Activated CD4-positive, alpha-beta memory T cell treated with anti-CD3 and anti-CD28 coated beads for 36 hours (primary cell): ENCODE measurements at regions of chrX and their contacts with region 1.

Region 1: GRCh38 chrX:100768679-100769338 is 36.9 kb upstream of the SYTL4 start:
- DNase-seq: peak; percentile 86
- H3K4me3 Mint-ChIP-seq: no peak overlapping the region
- H3K27ac Mint-ChIP-seq: no peak overlapping the region
- H3K4me1 Mint-ChIP-seq: no peaks in the 10 kb centered on the region
- H3K27me3 Mint-ChIP-seq: no peaks in the 10 kb centered on the region

Region 2: GRCh38 chrX:100674705-100675104 is 94.1 kb before region 1 on chrX:
- CTCF ChIA-PET with region 1: interaction called, 29 read pairs
- POLR2A ChIA-PET with region 1: no interaction called
- intact Hi-C with region 1: loop called (anchors 1 kb)
- DNase-seq: no peak
- H3K4me3 Mint-ChIP-seq: no peak overlapping the region
- H3K27ac Mint-ChIP-seq: no peak overlapping the region
- H3K4me1 Mint-ChIP-seq: peaks cover 20% of the 10 kb centered on the region
- H3K27me3 Mint-ChIP-seq: no peaks in the 10 kb centered on the region

Region 3: GRCh38 chrX:100685284-100685996 is 83.4 kb before region 1 on chrX:
- CTCF ChIA-PET with region 1: interaction called, 91 read pairs
- POLR2A ChIA-PET with region 1: no interaction called
- intact Hi-C with region 1: loop called (anchors 1 kb)
- DNase-seq: peak; percentile 71
- H3K4me3 Mint-ChIP-seq: no peak overlapping the region
- H3K27ac Mint-ChIP-seq: no peak overlapping the region
- H3K4me1 Mint-ChIP-seq: peaks cover 12% of the 10 kb centered on the region
- H3K27me3 Mint-ChIP-seq: peaks cover 1% of the 10 kb centered on the region

Region 4: DNA sequence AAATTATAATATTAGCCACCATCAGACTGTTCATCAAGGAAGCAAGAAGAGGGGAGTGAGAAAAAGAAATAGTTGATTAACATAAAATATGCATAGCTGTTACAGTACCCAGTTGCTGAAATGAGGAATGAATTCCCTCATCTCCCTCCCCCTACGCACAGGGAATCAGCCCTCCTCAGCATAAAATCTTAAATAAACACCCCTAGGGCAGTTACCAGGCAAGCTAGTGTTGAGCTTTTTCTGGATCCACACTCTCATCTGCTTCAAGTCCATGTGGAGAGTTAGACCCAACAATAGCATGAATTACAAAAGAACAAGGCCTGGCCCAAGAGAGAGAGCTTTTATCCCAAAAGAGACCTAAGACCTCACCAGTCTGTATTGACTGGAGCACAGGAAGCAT is 17.9 kb before region 1 on chrX:
- CTCF ChIA-PET with region 1: interaction called, 11 read pairs
- POLR2A ChIA-PET with region 1: no interaction called
- intact Hi-C with region 1: no loop called
- DNase-seq: no peak
- H3K4me3 Mint-ChIP-seq: no peak overlapping the region
- H3K27ac Mint-ChIP-seq: no peak overlapping the region
- H3K4me1 Mint-ChIP-seq: no peaks in the 10 kb centered on the region
- H3K27me3 Mint-ChIP-seq: no peaks in the 10 kb centered on the region

Region 5: GRCh38 chrX:100852810-100853209 is 84.0 kb after region 1 on chrX:
- CTCF ChIA-PET with region 1: no interaction called
- POLR2A ChIA-PET with region 1: no interaction called
- intact Hi-C with region 1: no loop called
- DNase-seq: no peak
- H3K4me3 Mint-ChIP-seq: no peak overlapping the region
- H3K27ac Mint-ChIP-seq: no peak overlapping the region
- H3K4me1 Mint-ChIP-seq: no peaks in the 10 kb centered on the region
- H3K27me3 Mint-ChIP-seq: no peaks in the 10 kb centered on the region